HEK293 (cell line): ENCODE measurements at regions of chr1 and their contacts with region 1.

Region 1: DNA sequence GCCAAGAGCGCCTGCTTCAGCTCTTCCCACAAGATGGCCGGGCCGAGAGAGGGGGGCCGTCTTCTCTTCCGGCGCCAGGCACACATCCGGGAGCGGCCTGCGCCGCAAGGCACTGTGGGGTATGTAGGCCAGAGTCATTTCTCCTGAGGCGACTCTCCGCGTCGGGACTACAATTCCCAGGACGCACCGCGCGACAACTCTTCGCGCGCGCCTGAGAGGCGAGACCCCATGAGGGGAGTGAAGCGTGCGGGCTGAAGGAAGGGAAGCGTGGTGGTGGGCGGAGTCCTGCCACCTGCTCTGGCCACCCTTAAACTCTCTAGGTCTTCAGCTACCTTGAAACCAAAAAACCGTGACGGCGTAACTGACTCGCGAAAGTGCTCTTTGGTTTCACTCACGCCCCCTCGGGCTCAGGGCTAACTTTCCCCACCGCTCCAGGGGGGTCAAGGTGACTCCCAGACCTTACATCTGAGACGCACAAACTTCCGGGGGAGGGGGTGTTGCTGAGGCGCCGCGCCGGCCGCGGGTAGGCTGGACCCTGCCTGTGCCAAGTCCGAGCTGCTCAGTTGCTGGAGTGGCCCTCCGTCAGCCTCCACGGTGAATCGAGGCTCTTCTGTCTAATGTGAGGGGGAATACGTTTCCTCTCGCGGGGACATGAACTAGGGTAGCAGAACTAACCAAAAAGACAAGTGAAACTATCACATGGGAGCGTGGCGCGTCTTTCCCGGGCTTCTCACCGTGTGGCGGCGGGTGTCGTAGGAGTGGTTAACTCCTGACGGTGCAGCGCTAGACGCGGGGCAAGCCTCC is at the start of gene SERBP1:
- H3K4me3 ChIP-seq: peak within 1 kb of the TSS; percentile 98
- H3K27ac ChIP-seq: peak within 1 kb of the TSS; percentile 96
- H3K4me1 ChIP-seq: peaks cover 9% of the 10 kb centered on the region
- CTCF ChIP-seq: no peak

Region 2: DNA sequence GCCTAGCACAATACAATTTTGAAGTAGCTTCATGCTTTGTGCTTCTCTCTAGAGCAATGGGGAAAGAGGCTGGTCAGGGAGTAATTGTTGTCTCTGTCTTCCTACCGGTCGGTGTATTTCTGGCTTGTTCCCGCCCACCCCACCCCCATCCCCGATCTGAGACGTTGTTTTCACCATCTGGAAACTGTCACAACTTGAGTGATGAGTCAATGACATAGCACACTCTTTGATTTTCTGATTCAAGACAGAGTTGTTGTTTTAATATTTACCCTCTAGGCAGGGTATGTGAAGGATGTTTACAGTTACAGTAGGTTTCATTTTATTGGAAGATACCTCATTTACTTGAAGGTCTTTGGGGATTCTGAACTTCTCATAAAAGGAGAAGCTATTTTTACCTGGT is 115.9 kb before region 1 on chr1:
- CTCF ChIA-PET with region 1: no interaction called
- POLR2A ChIA-PET with region 1: no interaction called
- H3K4me3 ChIP-seq: no peak overlapping the region
- H3K27ac ChIP-seq: no peak overlapping the region
- H3K4me1 ChIP-seq: peaks cover 5% of the 10 kb centered on the region; the same call in 1 of the 2 replicates
- CTCF ChIP-seq: no peak

Region 3: DNA sequence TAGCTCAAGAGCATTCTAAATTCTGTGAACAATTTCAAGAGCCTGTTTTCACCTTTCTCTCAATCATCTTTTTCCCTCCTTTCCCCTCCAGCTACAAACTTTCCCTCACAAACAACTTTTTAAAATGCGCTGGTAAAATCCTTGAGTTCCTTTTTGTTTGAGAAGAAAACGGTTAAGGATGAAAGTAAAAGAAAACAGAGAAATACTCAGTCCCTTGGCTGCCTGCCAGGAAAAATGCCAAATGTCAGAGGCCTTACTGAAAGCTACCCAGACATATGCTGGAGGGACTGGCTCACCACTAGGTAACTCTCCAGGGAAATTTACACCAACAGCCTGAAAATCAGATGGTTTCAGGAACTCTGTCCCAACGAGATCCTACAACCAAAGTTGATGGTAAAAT is 10.6 kb after region 1 on chr1:
- CTCF ChIA-PET with region 1: interaction called, 9 read pairs
- POLR2A ChIA-PET with region 1: interaction called, 11 read pairs
- H3K4me3 ChIP-seq: no peak overlapping the region
- H3K27ac ChIP-seq: 0 out of 2 replicates have a peak overlapping the region, but pooled peaks have one; percentile 18
- H3K4me1 ChIP-seq: peaks cover 12% of the 10 kb centered on the region
- CTCF ChIP-seq: no peak